ENCODE measurements at regions of chr3 and their contacts with region 1.

Region 1: DNA sequence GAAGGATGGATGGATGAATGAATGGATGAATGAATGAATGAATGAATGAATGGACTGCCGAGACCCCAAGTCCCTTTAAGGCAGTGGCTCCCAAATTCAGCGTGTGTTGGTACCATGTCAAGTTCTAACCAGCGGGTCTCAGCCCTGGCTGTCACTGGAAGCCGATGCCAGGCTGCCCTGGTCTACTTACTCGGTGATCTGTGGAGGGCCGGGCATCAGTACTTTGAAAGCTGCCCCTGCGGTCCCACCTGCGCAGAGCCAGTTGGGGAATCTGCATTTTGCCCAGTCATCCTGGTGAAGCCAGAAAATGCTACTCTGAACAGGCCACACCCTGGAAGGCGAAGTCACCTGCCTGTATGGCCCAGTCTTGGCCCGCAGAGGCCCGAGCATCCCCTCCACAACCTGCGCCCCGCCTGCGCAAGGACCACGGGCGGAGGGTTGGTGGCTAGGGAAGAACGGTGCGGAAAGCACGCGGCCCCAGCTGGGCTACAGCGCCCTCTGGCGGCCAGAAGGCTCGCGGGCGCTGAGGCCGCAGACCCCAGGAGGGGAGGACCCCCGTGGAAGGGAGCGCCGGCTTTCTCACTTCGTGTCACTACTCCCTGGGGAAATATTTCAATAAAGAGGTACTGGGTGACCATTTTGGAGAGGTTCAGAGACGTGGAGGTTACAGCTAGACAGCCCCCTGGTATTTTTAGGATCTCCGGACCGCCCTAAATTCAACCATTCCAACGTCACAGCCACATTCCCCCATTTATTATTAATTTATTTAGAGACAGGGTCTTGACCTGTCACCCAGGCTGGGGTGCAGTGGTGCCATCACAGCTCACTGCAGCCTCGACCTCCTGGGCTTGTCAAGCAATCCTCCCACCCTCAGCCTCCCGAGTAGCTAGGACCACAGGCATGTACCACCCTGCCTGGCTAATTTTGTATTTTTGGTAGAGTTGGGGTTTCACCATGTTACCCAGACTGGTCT is 34.9 kb downstream of the PRKCD start:
- DNase-seq: peak; percentile 68
- H3K4me3 Mint-ChIP-seq: no peak overlapping the region
- H3K27ac Mint-ChIP-seq: no peak overlapping the region
- H3K4me1 Mint-ChIP-seq: peaks cover 10% of the 10 kb centered on the region
- H3K27me3 Mint-ChIP-seq: no peaks in the 10 kb centered on the region

Region 2: GRCh38 chr3:53009826-53010539 is 185.9 kb before region 1 on chr3:
- CTCF ChIA-PET with region 1: no interaction called
- DNase-seq: no peak
- H3K4me3 Mint-ChIP-seq: no peak overlapping the region
- H3K27ac Mint-ChIP-seq: no peak overlapping the region
- H3K4me1 Mint-ChIP-seq: peaks cover 13% of the 10 kb centered on the region
- H3K27me3 Mint-ChIP-seq: no peaks in the 10 kb centered on the region

Region 3: DNA sequence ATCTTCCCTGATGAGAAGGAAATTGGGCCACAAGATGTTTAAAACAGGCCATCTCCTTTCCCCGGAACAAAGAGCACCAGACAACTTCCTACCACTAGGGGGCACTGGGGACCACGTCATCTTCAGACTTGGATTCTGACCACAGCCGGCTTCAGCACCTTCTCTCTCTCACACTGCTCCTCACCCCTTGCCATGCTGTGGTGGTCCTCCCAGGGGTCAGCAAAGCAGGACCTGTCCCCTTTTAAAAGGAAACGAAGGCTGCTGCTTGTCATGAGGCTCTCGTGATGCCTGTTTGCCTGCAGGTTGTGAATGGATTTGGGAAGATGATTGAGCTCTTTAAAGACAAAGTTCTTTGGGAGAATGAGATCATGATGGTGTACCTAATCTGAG is 81.9 kb before region 1 on chr3:
- CTCF ChIA-PET with region 1: interaction called, 148 read pairs
- DNase-seq: peak; percentile 90
- H3K4me3 Mint-ChIP-seq: no peak overlapping the region
- H3K27ac Mint-ChIP-seq: no peak overlapping the region
- H3K4me1 Mint-ChIP-seq: peaks cover 23% of the 10 kb centered on the region
- H3K27me3 Mint-ChIP-seq: no peaks in the 10 kb centered on the region

Region 4: DNA sequence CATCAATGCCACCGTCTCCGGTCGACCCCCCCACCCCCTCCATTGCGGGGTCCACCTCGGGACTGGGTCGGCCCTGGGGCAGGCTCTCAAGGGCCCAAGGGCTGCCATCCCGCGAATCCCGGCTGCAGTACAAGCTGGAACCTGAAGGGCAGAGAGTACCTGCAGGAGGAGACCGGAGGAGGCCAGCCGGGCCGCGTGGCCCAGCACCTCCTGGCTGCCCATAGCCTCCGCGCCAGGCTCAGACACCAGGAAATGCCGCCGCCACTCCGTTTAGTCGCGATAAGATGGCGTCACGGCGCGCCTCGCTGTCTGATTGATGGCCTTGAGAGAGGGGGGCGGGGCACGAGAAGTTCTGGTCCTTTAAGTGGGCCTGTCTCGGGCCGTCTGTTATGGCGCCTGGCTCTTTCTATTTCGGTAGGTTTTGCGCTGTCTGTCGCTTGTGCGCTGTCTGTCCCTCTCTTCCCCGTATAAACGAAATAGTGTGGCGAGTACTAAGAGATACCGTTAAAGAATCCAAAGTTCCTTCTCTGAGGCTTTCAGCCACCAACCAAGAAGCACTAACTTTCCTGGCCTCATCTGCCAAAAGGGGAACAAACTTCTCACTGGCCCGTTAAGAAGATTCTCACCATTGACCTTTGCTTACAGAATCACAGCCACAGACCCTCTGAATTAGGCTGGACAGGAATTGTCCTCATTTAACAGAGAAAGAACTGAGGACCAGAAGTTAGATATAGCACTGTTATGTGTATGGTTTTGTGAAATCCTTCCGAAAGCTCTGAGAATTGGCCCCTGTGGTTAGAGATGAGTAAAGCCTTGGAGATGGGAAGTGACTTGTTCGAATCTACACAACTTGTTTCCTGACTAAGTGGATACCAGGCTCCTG is 65.5 kb before region 1 on chr3 and contains the start of gene RFT1:
- CTCF ChIA-PET with region 1: interaction called, 161 read pairs
- DNase-seq: peak; percentile 100
- H3K4me3 Mint-ChIP-seq: peak within 1 kb of the TSS; percentile 88
- H3K27ac Mint-ChIP-seq: peak within 1 kb of the TSS; percentile 93
- H3K4me1 Mint-ChIP-seq: peaks cover 31% of the 10 kb centered on the region
- H3K27me3 Mint-ChIP-seq: no peaks in the 10 kb centered on the region

Region 5: DNA sequence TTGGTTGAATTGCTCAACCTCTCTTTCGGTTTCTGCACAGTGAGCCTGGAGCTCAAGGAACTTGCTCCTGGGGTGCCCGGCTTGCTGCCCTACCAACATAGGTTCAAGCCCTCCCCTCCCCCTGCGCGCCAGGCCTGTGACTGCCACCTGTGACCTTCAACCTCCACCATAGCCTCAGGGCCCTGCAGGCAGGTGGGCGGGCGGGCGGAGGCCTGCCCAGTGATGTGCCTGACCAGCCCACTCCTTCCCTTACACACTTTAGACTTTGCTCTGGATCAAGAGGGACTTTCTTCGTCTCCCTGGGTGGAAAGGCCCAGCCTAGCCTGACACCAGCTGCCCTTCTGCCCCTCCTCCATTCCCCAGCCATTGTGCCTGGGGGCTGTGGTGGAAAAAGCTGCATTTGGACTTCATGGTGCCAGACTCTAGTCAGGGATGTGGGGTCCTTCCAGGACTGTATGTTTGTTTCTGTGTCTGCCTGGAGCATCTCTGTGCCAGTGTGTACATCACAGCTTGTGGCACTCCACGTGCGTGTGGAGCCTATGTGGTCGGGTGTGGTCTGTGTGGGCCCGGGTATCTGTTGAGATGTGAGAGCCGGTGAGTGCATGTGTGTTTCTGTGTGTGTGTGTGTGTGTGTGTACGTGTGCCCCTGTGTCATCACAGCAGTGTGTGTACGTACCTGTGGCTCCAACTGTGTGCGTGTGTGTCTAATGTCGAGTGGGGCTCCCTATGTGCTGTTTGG is 25.4 kb before region 1 on chr3:
- CTCF ChIA-PET with region 1: interaction called, 10 read pairs
- DNase-seq: peak; percentile 41
- H3K4me3 Mint-ChIP-seq: no peak overlapping the region
- H3K27ac Mint-ChIP-seq: no peak overlapping the region
- H3K4me1 Mint-ChIP-seq: peaks cover 30% of the 10 kb centered on the region
- H3K27me3 Mint-ChIP-seq: no peaks in the 10 kb centered on the region

Region 6: DNA sequence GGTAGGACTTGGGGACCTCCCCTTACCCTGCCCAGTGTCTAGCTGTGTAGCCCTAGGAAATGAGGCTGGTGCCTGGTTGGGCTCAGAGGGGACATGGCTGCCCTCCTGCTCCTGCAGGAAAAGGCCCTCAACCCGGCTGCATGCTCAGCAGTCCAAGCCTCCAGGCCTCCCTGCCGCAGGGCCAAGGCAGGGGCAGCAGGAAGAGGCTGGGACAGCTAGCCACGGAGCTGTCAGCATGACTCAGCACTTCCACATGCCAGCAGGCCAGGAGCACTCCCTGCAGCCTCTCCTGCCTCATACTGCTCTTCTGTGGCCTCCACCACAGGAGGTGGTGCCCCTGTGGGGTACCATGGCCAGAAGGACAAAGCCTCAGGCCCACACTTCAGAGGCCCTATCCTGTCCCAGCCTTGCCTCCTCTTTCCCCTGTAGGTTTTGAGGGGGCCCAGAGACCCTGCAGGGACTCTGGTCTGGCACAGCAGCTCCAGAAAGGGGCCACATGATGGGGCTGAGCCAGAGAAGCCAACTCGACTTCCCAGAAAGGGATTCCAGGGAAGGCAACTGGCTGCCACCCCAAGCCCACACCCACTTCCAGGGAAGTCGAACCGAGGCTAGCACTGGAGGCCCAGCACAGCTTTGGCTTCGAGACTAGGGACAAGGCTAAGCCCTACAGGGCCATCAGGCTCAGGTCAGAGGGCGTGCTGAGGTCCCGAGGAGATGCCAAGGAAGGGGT is 40.4 kb after region 1 on chr3:
- CTCF ChIA-PET with region 1: no interaction called
- DNase-seq: no peak
- H3K4me3 Mint-ChIP-seq: no peak overlapping the region
- H3K27ac Mint-ChIP-seq: peak overlapping the region; percentile 70
- H3K4me1 Mint-ChIP-seq: peaks cover 28% of the 10 kb centered on the region
- H3K27me3 Mint-ChIP-seq: no peaks in the 10 kb centered on the region

Region 7: GRCh38 chr3:53845103-53845880 is 649.4 kb after region 1 on chr3:
- CTCF ChIA-PET with region 1: no interaction called
- DNase-seq: no peak
- H3K4me3 Mint-ChIP-seq: peak overlapping the region; percentile 57
- H3K27ac Mint-ChIP-seq: no peak overlapping the region
- H3K4me1 Mint-ChIP-seq: peaks cover 5% of the 10 kb centered on the region
- H3K27me3 Mint-ChIP-seq: peaks cover 85% of the 10 kb centered on the region